MCF 10A (cell line): ENCODE measurements at regions of chr3 and their contacts with region 1.

Region 1: GRCh38 chr3:12984023-12984823 is 89.0 kb downstream of the IQSEC1 start:
- DNase-seq: peak; percentile 78
- H3K4me3 Mint-ChIP-seq: no peak overlapping the region
- H3K27ac Mint-ChIP-seq: no peak overlapping the region
- H3K4me1 Mint-ChIP-seq: no peaks in the 10 kb centered on the region
- H3K27me3 Mint-ChIP-seq: no peaks in the 10 kb centered on the region
- CTCF ChIP-seq: peak; percentile 81

Region 2: DNA sequence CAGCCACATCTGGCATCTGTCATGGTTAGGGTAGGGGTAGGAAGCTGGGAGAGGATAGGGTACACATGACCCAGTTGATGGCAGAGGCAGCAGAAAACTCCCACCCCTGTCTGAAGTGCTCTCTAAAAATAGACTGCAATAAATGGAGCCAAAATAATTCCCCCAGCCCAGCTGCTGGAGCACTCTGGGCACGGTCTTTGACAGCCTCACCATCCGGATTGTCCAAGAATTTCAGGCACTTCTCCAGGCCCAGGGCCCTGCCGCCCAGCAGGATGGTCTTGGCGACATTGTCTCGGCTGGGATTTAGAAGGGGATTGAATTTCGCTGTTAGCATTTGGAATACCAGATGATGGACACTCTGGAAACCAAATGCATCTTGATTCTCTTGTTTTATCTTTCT is 14.7 kb before region 1 on chr3:
- CTCF ChIA-PET with region 1: interaction called, 25 read pairs
- POLR2A ChIA-PET with region 1: interaction called, 4 read pairs
- intact Hi-C with region 1: no loop called
- DNase-seq: no peak
- H3K4me3 Mint-ChIP-seq: no peak overlapping the region
- H3K27ac Mint-ChIP-seq: no peak overlapping the region
- H3K4me1 Mint-ChIP-seq: peaks cover 19% of the 10 kb centered on the region
- H3K27me3 Mint-ChIP-seq: peaks cover 18% of the 10 kb centered on the region
- CTCF ChIP-seq: no peak

Region 3: DNA sequence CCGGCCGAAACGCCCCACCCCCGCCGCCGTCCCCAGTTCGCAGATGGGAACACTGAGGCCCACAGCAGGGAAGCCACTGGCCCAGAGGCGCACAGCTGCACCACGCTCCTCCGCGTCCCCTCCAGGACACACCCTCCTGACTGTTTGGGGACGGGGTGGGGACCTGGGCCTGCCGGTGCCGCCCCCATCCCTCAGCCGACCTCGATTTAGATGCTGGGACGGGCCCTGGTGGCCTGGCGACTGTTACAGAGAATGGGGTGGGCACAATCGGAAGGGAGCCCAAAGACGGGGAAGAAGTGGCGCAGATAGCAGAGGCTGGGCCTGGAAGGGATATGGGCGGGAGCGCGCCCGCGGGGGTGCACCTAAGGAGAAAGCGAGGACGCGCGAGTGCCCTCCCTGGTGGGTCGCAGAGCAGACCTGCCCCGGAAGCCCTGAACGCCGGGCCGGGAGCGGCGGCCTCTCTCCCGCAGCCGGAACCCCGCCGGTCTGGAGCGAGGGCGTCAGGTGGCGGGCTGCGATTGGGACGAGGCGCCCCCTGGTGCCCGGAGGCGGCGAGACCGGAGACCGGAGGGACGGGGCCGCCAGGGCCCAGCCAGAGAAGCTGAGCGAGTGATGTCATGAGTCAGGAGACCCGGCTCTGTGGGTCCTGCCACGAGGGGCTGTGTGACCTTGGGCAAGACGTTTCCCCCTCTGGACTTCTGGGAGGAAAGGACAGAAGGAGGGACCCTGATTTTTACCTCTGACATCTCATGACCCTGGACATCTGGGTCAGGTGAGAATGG is 10.6 kb after region 1 on chr3:
- CTCF ChIA-PET with region 1: interaction called, 22 read pairs
- POLR2A ChIA-PET with region 1: interaction called, 5 read pairs
- intact Hi-C with region 1: no loop called
- DNase-seq: peak; percentile 77
- H3K4me3 Mint-ChIP-seq: peak overlapping the region; percentile 90
- H3K27ac Mint-ChIP-seq: no peak overlapping the region
- H3K4me1 Mint-ChIP-seq: no peaks in the 10 kb centered on the region
- H3K27me3 Mint-ChIP-seq: no peaks in the 10 kb centered on the region
- CTCF ChIP-seq: peak; percentile 71

Region 4: DNA sequence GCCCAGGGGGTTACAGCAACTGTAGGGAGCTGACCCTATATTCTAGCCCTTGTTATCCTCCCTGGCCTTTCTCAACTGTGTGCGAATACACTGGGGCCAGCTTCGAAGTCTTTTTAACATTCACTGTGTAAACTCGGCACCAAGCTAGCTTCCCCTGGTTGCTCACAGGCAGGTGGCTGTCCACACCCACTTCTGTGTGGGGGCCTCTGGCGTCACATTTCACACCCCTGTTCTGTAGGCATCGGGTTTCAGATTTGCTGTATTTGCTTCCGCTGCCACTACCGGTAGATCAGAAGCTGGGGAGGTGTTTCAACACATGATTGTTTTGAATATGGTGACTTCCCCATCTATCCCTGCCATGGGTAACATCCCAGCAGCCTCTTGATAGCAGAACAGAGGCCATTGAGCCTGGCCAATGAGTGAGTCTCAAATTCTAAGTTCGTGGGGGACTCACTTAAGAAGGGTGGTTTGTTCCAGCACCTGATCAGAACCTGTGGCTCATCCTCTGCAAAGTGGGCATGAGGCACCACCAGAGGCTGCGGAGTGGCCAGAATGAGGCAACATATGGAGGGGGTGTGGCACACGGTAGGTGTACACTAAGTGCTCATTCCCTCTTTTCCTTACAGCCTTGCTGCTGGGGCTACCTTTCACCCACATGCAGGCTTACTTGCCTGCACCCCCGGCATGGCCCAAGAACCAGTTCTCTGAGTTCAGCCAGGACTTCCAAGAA is 27.4 kb after region 1 on chr3:
- CTCF ChIA-PET with region 1: no interaction called
- POLR2A ChIA-PET with region 1: no interaction called
- intact Hi-C with region 1: no loop called
- DNase-seq: peak; percentile 50
- H3K4me3 Mint-ChIP-seq: no peak overlapping the region
- H3K27ac Mint-ChIP-seq: no peak overlapping the region
- H3K4me1 Mint-ChIP-seq: no peaks in the 10 kb centered on the region
- H3K27me3 Mint-ChIP-seq: peaks cover 7% of the 10 kb centered on the region
- CTCF ChIP-seq: no peak